Activated T-helper 2 cell treated with anti-CD3 and anti-CD28 coated beads, Interferon-gamma antibody, Interleukin-2, Interleukin-4, amounts not matched to agents 10 μg/mL and 5 μg/mL and 100 μg/mL, durations not matched to agents 14 hours and 24 hours and 36 hours (primary cell): ENCODE measurements at regions of chr2 and their contacts with region 1.

Region 1: GRCh38 chr2:100136310-100136709 is 6.1 kb downstream of the AFF3 start:
- DNase-seq: no peak
- H3K4me3 Mint-ChIP-seq: no peak overlapping the region
- H3K27ac Mint-ChIP-seq: no peak overlapping the region
- H3K4me1 Mint-ChIP-seq: peaks cover 23% of the 10 kb centered on the region
- H3K27me3 Mint-ChIP-seq: peaks cover 9% of the 10 kb centered on the region

Region 2: DNA sequence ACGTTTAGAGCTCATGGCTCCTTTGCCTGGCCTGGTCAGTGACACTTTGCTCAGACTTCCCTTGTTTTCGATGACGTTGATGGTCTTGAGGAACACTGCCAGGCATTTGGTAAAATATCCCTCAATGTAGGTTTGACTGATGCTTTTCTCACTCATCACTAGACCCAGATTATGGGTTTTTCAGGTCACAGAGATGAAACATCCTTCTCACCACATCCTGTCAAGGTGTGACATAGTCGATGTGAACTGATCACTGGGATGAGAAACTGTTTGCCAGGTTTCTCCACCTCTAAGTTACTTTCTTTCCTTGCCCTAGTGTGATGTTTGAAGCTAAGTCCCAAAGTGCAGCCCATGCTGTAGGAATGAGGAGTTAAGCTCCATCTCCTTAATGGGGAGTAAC is 75.4 kb before region 1 on chr2:
- intact Hi-C with region 1: loop called (anchors 5 kb)
- DNase-seq: no peak
- H3K4me3 Mint-ChIP-seq: no peak overlapping the region
- H3K27ac Mint-ChIP-seq: peak overlapping the region; percentile 5
- H3K4me1 Mint-ChIP-seq: peaks cover 25% of the 10 kb centered on the region
- H3K27me3 Mint-ChIP-seq: peaks cover under 1% of the 10 kb centered on the region

Region 3: DNA sequence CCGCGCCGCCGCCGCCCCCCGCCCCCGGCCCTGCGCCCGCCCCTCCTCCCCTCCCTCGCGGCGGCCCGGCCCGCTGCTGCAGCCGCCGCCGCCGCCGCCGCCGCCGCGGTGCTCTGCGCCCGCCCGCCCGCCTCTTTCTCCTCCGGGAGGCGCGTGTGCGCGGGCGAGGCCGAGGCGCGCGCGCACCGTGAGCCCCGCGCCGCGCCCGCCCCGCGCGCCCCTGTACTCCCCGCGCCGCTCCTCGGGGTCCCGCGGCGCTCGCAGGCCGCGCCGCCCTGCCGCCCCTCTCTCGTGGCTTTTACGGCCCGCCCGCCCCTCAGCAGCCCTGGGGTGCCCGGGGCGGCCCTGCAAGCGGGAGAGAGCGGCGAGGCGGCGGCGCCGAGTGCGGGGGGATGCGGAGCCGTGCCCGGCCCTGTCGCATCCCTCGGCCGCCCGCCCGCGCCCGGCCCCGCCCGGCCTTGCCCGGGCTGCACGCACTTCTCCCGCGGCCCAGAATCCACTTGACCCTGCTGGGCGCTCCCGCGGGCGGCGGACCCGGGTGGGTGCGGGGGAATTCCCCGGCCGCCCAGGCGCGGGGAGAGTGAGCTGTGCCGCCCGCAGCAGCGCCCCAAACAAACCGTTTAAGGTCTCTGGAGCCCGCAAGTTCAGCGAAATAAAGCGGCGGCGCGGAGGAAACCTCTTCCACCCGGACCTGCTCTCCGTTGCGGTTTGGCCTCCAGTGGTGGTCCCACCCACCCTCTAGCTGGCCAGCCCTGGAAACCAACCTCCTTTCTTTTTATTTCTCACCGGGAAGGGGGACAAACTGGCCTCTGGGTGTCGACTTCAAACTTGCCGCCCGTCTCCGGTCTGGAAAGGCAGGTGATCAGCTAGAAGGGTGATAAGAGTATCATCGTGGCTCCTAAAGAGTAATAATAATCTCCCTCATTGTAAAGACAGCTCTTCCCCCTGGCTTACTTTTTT is 31.3 kb before region 1 on chr2:
- intact Hi-C with region 1: no loop called
- DNase-seq: no peak
- H3K4me3 Mint-ChIP-seq: peak overlapping the region; percentile 77
- H3K27ac Mint-ChIP-seq: no peak overlapping the region
- H3K4me1 Mint-ChIP-seq: peaks cover 5% of the 10 kb centered on the region
- H3K27me3 Mint-ChIP-seq: peaks cover 41% of the 10 kb centered on the region

Region 4: DNA sequence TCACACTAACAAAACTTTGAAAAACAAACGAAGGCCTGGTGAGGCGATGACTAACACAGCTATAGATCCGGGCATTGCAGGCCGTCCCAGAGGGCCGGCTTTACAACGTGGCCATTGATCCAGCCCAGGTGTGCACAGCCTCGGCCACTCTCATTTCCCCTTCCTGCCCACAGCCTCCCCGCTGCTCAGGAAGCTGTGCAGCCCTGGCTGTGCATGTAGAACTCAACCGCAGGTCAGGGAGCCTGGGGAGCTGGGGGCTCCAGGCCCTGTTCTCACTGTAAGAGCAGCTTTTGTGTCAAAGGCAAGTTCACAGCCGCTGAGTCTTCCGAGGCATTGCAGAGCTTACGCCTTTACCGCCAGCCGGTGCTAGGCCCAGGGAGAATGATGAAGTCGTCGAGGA is 98.8 kb after region 1 on chr2:
- intact Hi-C with region 1: no loop called
- DNase-seq: no peak
- H3K4me3 Mint-ChIP-seq: no peak overlapping the region
- H3K27ac Mint-ChIP-seq: no peak overlapping the region
- H3K4me1 Mint-ChIP-seq: peaks cover 9% of the 10 kb centered on the region
- H3K27me3 Mint-ChIP-seq: peaks cover 11% of the 10 kb centered on the region